T-cell (primary cell): ENCODE measurements at regions of chr1 and their contacts with region 1.

Region 1: DNA sequence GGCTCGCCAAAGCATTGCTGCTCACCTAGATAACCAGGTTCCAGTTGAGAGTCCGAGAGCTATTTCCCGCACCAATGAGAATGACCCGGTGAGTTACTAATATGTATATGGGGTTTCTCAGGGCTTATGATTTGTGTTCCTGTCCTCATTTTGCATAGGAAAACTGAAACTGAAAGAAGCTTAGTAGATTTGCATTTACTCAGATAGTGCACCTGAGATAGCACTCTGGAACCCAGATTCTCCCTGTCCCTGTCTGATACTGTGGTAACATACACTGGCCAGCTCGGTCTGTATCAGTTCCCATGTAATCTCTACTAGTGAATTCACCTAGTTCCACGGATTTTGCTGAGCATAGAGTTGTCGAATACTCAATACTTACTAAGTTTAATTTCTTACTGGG is 28.1 kb downstream of the DAP3 start:
- DNase-seq: no peak
- ATAC-seq: no peak
- H3K4me3 ChIP-seq: no peak overlapping the region
- H3K4me3 Mint-ChIP-seq: no peak overlapping the region
- H3K27ac ChIP-seq: no peak overlapping the region
- H3K27ac Mint-ChIP-seq: peak overlapping the region; percentile 23 to 41
- H3K4me1 ChIP-seq: no peaks in the 10 kb centered on the region
- H3K4me1 Mint-ChIP-seq: peaks cover 0 to 15% (median 10%) of the 10 kb centered on the region in 3 donors
- H3K27me3 ChIP-seq: no peaks in the 10 kb centered on the region
- H3K27me3 Mint-ChIP-seq: no peaks in the 10 kb centered on the region

Region 2: GRCh38 chr1:154431586-154432373 is 1285.3 kb before region 1 on chr1:
- CTCF ChIA-PET with region 1: no interaction called
- POLR2A ChIA-PET with region 1: interaction called in 1 of 2 experiments, 12 read pairs
- DNase-seq: peak in 2 of 35 experiments; percentile 33 to 55
- ATAC-seq: peak in 3 of 4 experiments; percentile 28 to 64 (median 46)
- H3K4me3 ChIP-seq: no peak overlapping the region
- H3K4me3 Mint-ChIP-seq: peak overlapping the region in 1 of 3 donors; percentile 13
- H3K27ac ChIP-seq: peak overlapping the region; percentile 22
- H3K27ac Mint-ChIP-seq: peak overlapping the region; percentile 70 to 83
- H3K4me1 ChIP-seq: peaks cover 0 to 67% of the 10 kb centered on the region in 2 experiments
- H3K4me1 Mint-ChIP-seq: peaks cover 38 to 63% (median 59%) of the 10 kb centered on the region in 3 donors
- H3K27me3 ChIP-seq: peaks cover 0 to 5% of the 10 kb centered on the region in 2 experiments
- H3K27me3 Mint-ChIP-seq: no peaks in the 10 kb centered on the region

Region 3: GRCh38 chr1:155729031-155729898 is 12.2 kb after region 1 on chr1:
- CTCF ChIA-PET with region 1: no interaction called
- POLR2A ChIA-PET with region 1: no interaction called
- DNase-seq: peak in 25 of 35 experiments; percentile 2 to 58 (median 23)
- ATAC-seq: peak in 1 of 4 experiments; percentile 51
- H3K4me3 ChIP-seq: no peak overlapping the region
- H3K4me3 Mint-ChIP-seq: no peak overlapping the region
- H3K27ac ChIP-seq: no peak overlapping the region
- H3K27ac Mint-ChIP-seq: peak overlapping the region in 1 of 2 donors; percentile 39
- H3K4me1 ChIP-seq: no peaks in the 10 kb centered on the region
- H3K4me1 Mint-ChIP-seq: no peaks in the 10 kb centered on the region
- H3K27me3 ChIP-seq: no peaks in the 10 kb centered on the region
- H3K27me3 Mint-ChIP-seq: no peaks in the 10 kb centered on the region